ENCODE measurements at regions of chr4 and their contacts with region 1.

Region 1: DNA sequence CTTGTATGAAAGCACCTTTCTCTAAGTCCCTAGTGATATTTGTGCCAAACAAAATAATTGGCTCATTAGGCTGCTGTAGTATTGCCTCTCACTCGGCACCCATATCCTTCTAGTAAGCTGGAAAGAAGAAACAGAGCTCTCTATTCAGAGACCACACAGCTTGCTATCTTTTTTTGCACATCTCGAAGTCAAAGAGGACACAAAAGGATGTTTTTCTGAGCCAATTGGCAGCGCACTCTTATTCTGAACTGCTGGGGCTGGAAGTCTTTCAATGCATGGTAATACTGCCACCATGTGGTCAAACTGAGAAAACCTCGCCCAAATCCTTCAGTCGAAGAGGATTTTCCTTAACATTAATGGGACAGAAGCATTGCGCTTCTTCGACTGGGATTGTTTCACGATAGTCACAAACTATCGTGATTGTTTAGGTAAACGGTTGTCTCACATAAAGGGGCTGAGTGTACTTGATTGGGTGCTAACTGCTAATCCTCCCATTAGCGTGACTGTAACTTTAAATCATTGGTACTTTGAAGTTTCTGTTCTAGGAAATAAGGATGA is 572.0 kb upstream of the LCORL start:
- DNase-seq: peak in 8 of 9 donors; percentile 25 to 65 (median 51)
- ATAC-seq: peak; percentile 78
- H3K4me3 ChIP-seq: no peak overlapping the region
- H3K4me3 Mint-ChIP-seq: peak overlapping the region in 1 of 10 donors; percentile 53
- H3K27ac ChIP-seq: no peak overlapping the region
- H3K27ac Mint-ChIP-seq: no peak overlapping the region
- H3K4me1 ChIP-seq: no peaks in the 10 kb centered on the region
- H3K4me1 Mint-ChIP-seq: peaks cover 0 to 7% (median 0%) of the 10 kb centered on the region in 7 donors
- H3K27me3 ChIP-seq: no peaks in the 10 kb centered on the region
- H3K27me3 Mint-ChIP-seq: peaks cover 0 to 30% (median 15%) of the 10 kb centered on the region in 5 donors

Region 2: DNA sequence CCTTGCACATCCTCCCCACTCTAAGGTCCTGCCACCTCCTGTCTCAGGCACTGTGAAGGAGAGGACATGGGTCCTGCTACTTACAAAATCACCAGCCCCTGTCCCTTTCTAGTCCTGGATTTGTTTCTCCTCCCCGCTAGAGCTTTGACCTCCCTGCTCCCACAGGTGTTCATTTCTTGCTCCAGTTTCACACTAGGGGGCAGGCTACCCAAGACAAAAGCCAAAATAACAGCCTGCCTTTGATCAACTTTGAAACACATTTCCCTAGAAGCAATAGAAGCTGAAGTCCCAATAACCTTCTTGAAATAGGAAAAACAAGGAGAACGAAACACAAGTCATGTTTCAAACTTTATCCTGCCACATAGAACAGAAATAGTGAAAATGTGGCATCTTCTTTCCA is 1246.1 kb before region 1 on chr4:
- CTCF ChIA-PET with region 1: no interaction called
- POLR2A ChIA-PET with region 1: no interaction called
- intact Hi-C with region 1: loop called in 1 of 2 experiments (anchors 10 kb)
- DNase-seq: peak in 6 of 9 donors; percentile 14 to 34 (median 20)
- ATAC-seq: peak; percentile 40
- H3K4me3 ChIP-seq: no peak overlapping the region
- H3K4me3 Mint-ChIP-seq: no peak overlapping the region
- H3K27ac ChIP-seq: no peak overlapping the region
- H3K27ac Mint-ChIP-seq: no peak overlapping the region
- H3K4me1 ChIP-seq: no peaks in the 10 kb centered on the region
- H3K4me1 Mint-ChIP-seq: no peaks in the 10 kb centered on the region
- H3K27me3 ChIP-seq: no peaks in the 10 kb centered on the region
- H3K27me3 Mint-ChIP-seq: peaks cover 0 to 6% (median 0%) of the 10 kb centered on the region in 5 donors

Region 3: DNA sequence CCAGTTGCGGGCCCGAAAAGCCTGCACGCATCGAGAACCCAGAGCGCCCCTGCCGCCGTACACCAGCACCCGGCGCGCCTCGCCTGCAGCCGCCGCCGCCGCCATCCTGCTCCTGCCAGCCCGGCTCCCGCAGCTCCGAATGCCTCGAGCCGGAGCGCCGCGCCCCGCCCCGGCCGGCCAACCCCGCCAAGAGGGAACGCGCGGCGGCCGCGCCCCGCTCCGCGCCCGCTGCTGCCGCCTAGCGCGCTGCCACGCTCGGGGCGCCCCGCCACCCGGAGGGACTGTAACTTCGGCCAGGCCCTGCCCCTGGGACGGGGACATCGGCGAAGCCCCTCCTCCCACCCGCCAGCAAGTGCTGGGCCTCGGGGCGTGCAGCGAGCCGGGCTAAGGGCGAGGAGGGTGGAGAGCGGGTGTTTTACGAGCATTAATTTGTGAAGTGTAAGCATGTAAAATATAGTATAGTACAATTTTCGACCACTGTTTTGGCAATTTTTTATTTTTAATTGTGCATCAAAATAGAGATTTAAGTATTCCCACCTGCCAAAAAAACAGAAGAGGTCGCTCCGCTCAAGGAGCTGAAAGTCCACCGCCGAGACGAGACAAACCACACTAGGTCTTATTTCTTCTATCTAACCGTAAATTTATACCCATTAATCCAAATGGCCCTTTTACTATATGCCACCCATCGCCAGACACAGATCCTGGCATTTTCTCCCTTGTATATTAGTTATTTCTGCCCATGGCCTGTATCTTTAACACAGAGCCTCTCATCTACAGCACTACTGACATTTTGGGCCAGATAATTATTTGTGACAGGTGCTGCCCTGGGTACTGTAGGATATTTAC is 1081.4 kb before region 1 on chr4 and contains the start of gene QDPR:
- CTCF ChIA-PET with region 1: no interaction called
- POLR2A ChIA-PET with region 1: no interaction called
- intact Hi-C with region 1: loop called (anchors 1 kb)
- DNase-seq: peak; percentile 55 to 81 (median 70)
- ATAC-seq: peak; percentile 95
- H3K4me3 ChIP-seq: peak within 1 kb of the TSS; percentile 94
- H3K4me3 Mint-ChIP-seq: peak within 1 kb of the TSS; percentile 86 to 100 (median 96)
- H3K27ac ChIP-seq: peak within 1 kb of the TSS; percentile 69
- H3K27ac Mint-ChIP-seq: peak within 1 kb of the TSS; percentile 83 to 96 (median 85)
- H3K4me1 ChIP-seq: peaks cover 9 to 10% of the 10 kb centered on the region in 2 donors
- H3K4me1 Mint-ChIP-seq: peaks cover 18 to 42% (median 34%) of the 10 kb centered on the region in 7 donors
- H3K27me3 ChIP-seq: no peaks in the 10 kb centered on the region
- H3K27me3 Mint-ChIP-seq: peaks cover 0 to 18% (median 6%) of the 10 kb centered on the region in 5 donors
- total RNA-seq, gene QDPR: 11.8 to 27.7 (median 23.1) TPM

Region 4: DNA sequence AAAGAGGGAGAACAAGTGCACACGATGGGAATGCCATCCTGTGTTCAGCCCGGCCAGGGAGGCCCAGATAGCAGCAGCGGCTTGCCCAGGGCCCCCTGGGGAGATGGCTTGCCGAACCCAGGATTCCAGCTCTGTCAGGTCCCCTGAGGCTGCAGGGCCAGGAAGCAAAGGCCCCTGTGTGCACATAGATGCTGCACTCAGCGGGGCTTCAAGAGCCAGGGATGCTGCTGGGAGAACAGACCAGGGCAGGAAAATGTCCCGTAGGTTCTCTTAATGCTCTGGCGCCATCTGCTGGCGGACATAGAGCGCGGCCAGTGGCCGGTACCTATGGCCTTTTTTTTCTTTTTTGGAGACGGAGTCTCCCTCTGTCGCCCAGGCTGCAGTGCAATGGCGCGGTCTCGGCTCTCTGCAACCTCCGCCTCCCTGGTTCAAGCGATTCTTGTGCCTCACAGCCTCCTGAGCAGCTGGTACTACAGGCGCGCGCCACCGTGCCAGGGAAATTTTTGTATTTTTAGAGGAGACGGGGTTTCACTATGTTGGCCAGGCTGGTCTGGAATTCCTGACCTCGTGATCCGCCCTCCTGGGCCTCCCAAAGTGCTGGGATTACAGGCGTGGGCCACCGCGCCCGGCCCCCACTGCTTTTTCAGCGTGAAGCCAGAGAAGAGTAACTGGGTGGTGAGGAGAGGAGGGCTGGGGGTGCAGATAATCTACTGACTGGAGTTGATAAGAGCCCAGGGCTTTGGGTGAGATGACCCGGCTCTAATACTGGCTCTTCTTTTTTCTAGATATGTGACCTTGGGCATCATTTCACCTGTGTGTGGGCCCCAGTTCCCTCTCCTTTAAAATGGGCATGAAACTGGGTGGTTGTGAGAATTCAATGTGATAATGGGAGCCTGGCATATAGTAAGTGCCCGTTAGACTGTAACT is 956.6 kb before region 1 on chr4:
- CTCF ChIA-PET with region 1: interaction called, 6 read pairs
- POLR2A ChIA-PET with region 1: no interaction called
- intact Hi-C with region 1: loop called (anchors 2 to 5 kb)
- DNase-seq: peak; percentile 33 to 71 (median 55)
- ATAC-seq: peak; percentile 89
- H3K4me3 ChIP-seq: no peak overlapping the region
- H3K4me3 Mint-ChIP-seq: no peak overlapping the region
- H3K27ac ChIP-seq: peak overlapping the region; percentile 27
- H3K27ac Mint-ChIP-seq: peak overlapping the region in 5 of 9 donors; percentile 32 to 65 (median 48)
- H3K4me1 ChIP-seq: no peaks in the 10 kb centered on the region
- H3K4me1 Mint-ChIP-seq: peaks cover 0 to 3% (median 0%) of the 10 kb centered on the region in 7 donors
- H3K27me3 ChIP-seq: no peaks in the 10 kb centered on the region
- H3K27me3 Mint-ChIP-seq: no peaks in the 10 kb centered on the region

Region 5: GRCh38 chr4:17817020-17817419 is 776.5 kb before region 1 on chr4:
- CTCF ChIA-PET with region 1: interaction called, 13 read pairs
- POLR2A ChIA-PET with region 1: no interaction called
- intact Hi-C with region 1: loop called (anchors 1 kb)
- DNase-seq: peak in 6 of 9 donors; percentile 13 to 53 (median 41)
- ATAC-seq: peak; percentile 90
- H3K4me3 ChIP-seq: no peak overlapping the region
- H3K4me3 Mint-ChIP-seq: peak overlapping the region in 1 of 10 donors; percentile 84
- H3K27ac ChIP-seq: no peak overlapping the region
- H3K27ac Mint-ChIP-seq: peak overlapping the region in 1 of 9 donors; percentile 85
- H3K4me1 ChIP-seq: no peaks in the 10 kb centered on the region
- H3K4me1 Mint-ChIP-seq: peaks cover 0 to 62% (median 6%) of the 10 kb centered on the region in 7 donors
- H3K27me3 ChIP-seq: no peaks in the 10 kb centered on the region
- H3K27me3 Mint-ChIP-seq: no peaks in the 10 kb centered on the region

Region 6: GRCh38 chr4:17934286-17934685 is 659.2 kb before region 1 on chr4:
- CTCF ChIA-PET with region 1: no interaction called
- POLR2A ChIA-PET with region 1: no interaction called
- intact Hi-C with region 1: loop called (anchors 1 to 5 kb)
- DNase-seq: no peak
- ATAC-seq: no peak
- H3K4me3 ChIP-seq: no peak overlapping the region
- H3K4me3 Mint-ChIP-seq: no peak overlapping the region
- H3K27ac ChIP-seq: no peak overlapping the region
- H3K27ac Mint-ChIP-seq: no peak overlapping the region
- H3K4me1 ChIP-seq: no peaks in the 10 kb centered on the region
- H3K4me1 Mint-ChIP-seq: no peaks in the 10 kb centered on the region
- H3K27me3 ChIP-seq: no peaks in the 10 kb centered on the region
- H3K27me3 Mint-ChIP-seq: no peaks in the 10 kb centered on the region

Region 7: GRCh38 chr4:18645351-18645750 is 51.8 kb after region 1 on chr4:
- CTCF ChIA-PET with region 1: no interaction called
- POLR2A ChIA-PET with region 1: no interaction called
- intact Hi-C with region 1: no loop called
- DNase-seq: no peak
- ATAC-seq: no peak
- H3K4me3 ChIP-seq: no peak overlapping the region
- H3K4me3 Mint-ChIP-seq: no peak overlapping the region
- H3K27ac ChIP-seq: no peak overlapping the region
- H3K27ac Mint-ChIP-seq: no peak overlapping the region
- H3K4me1 ChIP-seq: no peaks in the 10 kb centered on the region
- H3K4me1 Mint-ChIP-seq: no peaks in the 10 kb centered on the region
- H3K27me3 ChIP-seq: no peaks in the 10 kb centered on the region
- H3K27me3 Mint-ChIP-seq: peaks cover 0 to 4% (median 0%) of the 10 kb centered on the region in 5 donors

Region 8: GRCh38 chr4:18869166-18869565 is 275.6 kb after region 1 on chr4:
- CTCF ChIA-PET with region 1: no interaction called
- POLR2A ChIA-PET with region 1: no interaction called
- intact Hi-C with region 1: no loop called
- DNase-seq: no peak
- ATAC-seq: no peak
- H3K4me3 ChIP-seq: no peak overlapping the region
- H3K4me3 Mint-ChIP-seq: no peak overlapping the region
- H3K27ac ChIP-seq: no peak overlapping the region
- H3K27ac Mint-ChIP-seq: no peak overlapping the region
- H3K4me1 ChIP-seq: no peaks in the 10 kb centered on the region
- H3K4me1 Mint-ChIP-seq: no peaks in the 10 kb centered on the region
- H3K27me3 ChIP-seq: no peaks in the 10 kb centered on the region
- H3K27me3 Mint-ChIP-seq: no peaks in the 10 kb centered on the region